CD4-positive, alpha-beta T cell (primary cell): ENCODE measurements at regions of chr13 and their contacts with region 1.

Region 1: DNA sequence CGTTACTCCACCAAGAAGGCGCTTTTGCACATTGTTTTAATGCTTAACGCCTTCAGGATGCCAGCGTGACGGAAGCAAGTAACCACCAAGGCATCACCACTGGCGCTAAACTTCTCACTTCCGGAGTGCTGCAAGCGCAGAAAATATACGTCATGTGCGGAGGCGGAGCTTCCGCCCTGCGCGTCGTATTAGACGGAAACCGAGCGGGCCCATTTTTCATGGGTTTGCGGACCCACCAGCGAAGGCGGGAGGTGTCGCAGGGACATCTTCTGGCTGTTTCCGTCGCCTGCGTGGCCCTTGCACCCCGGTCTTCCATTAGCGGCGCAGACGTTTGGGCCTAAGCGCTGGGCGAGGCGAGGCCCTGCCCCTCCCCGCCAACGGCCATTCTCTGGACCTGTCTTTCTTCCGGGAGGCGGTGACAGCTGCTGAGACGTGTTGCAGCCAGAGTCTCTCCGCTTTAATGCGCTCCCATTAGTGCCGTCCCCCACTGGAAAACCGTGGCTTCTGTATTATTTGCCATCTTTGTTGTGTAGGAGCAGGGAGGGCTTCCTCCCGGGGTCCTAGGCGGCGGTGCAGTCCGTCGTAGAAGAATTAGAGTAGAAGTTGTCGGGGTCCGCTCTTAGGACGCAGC is at the start of gene ERCC5:
- DNase-seq: peak; percentile 91 to 98 (median 95)
- ATAC-seq: peak; percentile 69
- H3K4me3 ChIP-seq: peak within 1 kb of the TSS; percentile 98
- H3K4me3 Mint-ChIP-seq: peak within 1 kb of the TSS; percentile 100
- H3K27ac ChIP-seq: peak within 1 kb of the TSS; percentile 97 to 99
- H3K27ac Mint-ChIP-seq: peak within 1 kb of the TSS; percentile 100
- H3K4me1 ChIP-seq: peaks cover 31% of the 10 kb centered on the region
- H3K4me1 Mint-ChIP-seq: peaks cover 52% of the 10 kb centered on the region
- H3K27me3 ChIP-seq: no peaks in the 10 kb centered on the region
- H3K27me3 Mint-ChIP-seq: no peaks in the 10 kb centered on the region
- CTCF ChIP-seq: peak; percentile 12
- total RNA-seq, gene ERCC5: 129 to 136 TPM

Region 2: DNA sequence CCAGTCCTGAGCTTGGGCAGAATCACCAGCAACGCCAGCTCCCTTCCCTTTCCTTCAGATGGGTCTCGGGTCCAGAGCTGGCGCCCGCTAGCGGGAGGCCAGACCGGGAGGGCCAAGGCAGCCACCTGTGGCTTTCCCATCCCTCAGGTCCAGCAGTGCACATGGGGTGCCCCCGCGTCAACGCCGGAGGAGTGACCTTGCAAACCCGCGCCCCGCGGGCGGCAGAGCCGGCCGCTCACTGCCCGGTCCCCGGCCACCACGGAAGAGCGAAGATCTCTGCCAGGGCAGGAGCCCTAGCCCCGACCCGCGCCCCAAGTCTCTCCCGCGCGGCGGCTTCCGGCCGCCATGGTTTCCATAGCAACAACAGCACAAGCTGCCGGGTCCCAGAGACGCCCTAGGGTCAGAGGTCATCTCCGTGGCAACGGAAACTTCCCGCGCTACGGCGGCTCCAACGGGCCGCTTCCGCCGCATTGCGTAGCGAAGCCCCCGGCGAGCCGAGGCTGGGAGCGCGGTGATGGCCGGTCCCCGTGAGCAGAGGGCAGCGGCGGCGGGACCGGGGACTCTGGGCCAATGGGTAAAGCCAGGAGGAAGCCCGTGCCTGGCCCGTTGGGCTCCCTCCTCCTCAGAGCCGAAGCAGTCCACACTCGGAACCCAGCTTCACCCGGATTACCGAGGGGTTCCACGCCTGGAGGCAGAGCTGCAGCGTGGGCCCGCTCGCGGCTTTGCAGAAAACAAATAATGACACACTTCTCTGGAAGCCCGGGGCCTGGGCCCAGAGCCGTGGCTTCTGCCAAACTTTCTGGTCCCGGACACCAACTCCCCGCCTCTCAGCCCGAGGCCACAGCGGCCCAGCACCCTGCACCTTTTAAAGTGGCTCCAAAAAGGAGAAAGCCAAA is 451.3 kb before region 1 on chr13:
- CTCF ChIA-PET with region 1: no interaction called
- POLR2A ChIA-PET with region 1: interaction called, 23 read pairs
- intact Hi-C with region 1: loop called (anchors 2 to 5 kb)
- DNase-seq: peak; percentile 93 to 98 (median 96)
- ATAC-seq: peak; percentile 94
- H3K4me3 ChIP-seq: peak overlapping the region; percentile 80
- H3K4me3 Mint-ChIP-seq: peak overlapping the region; percentile 95
- H3K27ac ChIP-seq: peak overlapping the region in 1 of 2 donors; percentile 50
- H3K27ac Mint-ChIP-seq: peak overlapping the region; percentile 77
- H3K4me1 ChIP-seq: peaks cover 18% of the 10 kb centered on the region
- H3K4me1 Mint-ChIP-seq: peaks cover 19% of the 10 kb centered on the region
- H3K27me3 ChIP-seq: peaks cover 3 to 6% of the 10 kb centered on the region in 2 experiments
- H3K27me3 Mint-ChIP-seq: peaks cover 20% of the 10 kb centered on the region
- CTCF ChIP-seq: no peak

Region 3: GRCh38 chr13:102609696-102610095 is 236.0 kb before region 1 on chr13:
- CTCF ChIA-PET with region 1: no interaction called
- POLR2A ChIA-PET with region 1: interaction called, 28 read pairs
- intact Hi-C with region 1: no loop called
- DNase-seq: no peak
- ATAC-seq: peak; percentile 41
- H3K4me3 ChIP-seq: no peak overlapping the region
- H3K4me3 Mint-ChIP-seq: peak overlapping the region; percentile 9
- H3K27ac ChIP-seq: no peak overlapping the region
- H3K27ac Mint-ChIP-seq: peak overlapping the region; percentile 71
- H3K4me1 ChIP-seq: peaks cover 6% of the 10 kb centered on the region
- H3K4me1 Mint-ChIP-seq: peaks cover 65% of the 10 kb centered on the region
- H3K27me3 ChIP-seq: no peaks in the 10 kb centered on the region
- H3K27me3 Mint-ChIP-seq: no peaks in the 10 kb centered on the region
- CTCF ChIP-seq: no peak

Region 4: DNA sequence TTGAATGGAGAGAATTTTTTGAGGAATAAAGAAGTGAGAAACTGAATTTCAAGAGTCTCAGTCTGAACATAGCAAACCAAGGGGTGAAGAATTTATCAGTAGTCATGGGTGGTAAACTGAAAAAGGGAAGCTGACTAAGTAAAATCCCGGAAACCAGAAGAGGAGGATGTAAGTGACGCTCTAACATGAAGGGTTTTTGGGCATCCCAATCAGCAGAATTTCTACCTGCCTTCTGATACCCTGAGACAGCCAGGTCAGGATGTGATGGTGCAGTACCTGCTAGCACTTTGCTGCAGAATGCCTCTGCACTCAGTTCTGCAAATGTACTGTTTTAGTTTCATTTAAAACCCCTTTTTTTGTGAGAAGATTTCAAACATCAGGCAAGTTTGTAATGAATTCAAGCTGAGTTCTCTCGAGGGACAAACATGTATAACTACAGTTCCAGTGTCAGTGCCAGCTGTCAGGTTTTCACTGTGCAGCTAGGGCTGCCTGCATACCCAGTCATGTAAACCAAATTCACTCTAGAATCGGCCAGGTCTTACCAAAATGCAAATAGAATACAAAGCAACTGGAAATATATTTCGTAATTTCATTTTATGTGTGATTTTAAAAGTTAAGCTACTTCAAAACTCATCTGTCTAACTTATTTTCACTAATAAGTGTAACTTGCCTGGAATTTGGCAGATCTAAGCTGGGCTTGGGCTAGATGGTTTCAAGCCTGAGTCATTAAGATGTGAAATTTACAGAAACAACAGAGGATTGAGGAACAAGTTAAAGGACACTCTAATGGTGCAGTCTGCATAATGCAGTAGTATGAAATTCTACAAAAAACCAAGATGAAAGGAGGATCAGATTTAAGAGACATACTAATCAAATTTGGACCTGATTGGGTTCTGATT is 164.7 kb before region 1 on chr13:
- CTCF ChIA-PET with region 1: no interaction called
- POLR2A ChIA-PET with region 1: interaction called, 4 read pairs
- intact Hi-C with region 1: loop called in 1 of 2 experiments (anchors 5 kb)
- DNase-seq: peak in 4 of 14 experiments; percentile 14 to 50 (median 28)
- ATAC-seq: peak; percentile 82
- H3K4me3 ChIP-seq: no peak overlapping the region
- H3K4me3 Mint-ChIP-seq: no peak overlapping the region
- H3K27ac ChIP-seq: no peak overlapping the region
- H3K27ac Mint-ChIP-seq: peak overlapping the region; percentile 47
- H3K4me1 ChIP-seq: peaks cover 2% of the 10 kb centered on the region
- H3K4me1 Mint-ChIP-seq: peaks cover 20% of the 10 kb centered on the region
- H3K27me3 ChIP-seq: no peaks in the 10 kb centered on the region
- H3K27me3 Mint-ChIP-seq: no peaks in the 10 kb centered on the region
- CTCF ChIP-seq: no peak

Region 5: DNA sequence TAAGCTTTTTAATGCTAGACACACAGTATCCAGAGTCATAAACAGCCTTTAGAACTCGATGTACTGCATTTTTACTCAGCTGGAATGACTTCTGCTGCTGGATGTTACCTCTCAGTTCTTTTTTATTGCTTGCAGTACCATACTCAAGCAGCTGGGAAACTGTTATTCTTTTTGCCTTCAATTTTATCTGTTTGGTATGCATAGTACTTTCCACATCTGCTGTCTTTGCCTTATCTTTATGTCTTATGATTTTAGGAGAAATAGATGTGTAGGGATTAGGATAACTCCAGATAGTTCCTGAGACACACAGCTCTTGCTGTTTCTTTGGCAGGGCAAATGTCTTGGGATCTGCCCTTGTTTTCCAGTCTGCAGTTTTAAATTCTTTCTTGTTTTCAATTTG is 103.6 kb before region 1 on chr13:
- CTCF ChIA-PET with region 1: no interaction called
- POLR2A ChIA-PET with region 1: no interaction called
- intact Hi-C with region 1: no loop called
- DNase-seq: no peak
- ATAC-seq: no peak
- H3K4me3 ChIP-seq: no peak overlapping the region
- H3K4me3 Mint-ChIP-seq: no peak overlapping the region
- H3K27ac ChIP-seq: no peak overlapping the region
- H3K27ac Mint-ChIP-seq: no peak overlapping the region
- H3K4me1 ChIP-seq: no peaks in the 10 kb centered on the region
- H3K4me1 Mint-ChIP-seq: no peaks in the 10 kb centered on the region
- H3K27me3 ChIP-seq: peaks cover 7 to 11% of the 10 kb centered on the region in 2 experiments
- H3K27me3 Mint-ChIP-seq: peaks cover 28% of the 10 kb centered on the region
- CTCF ChIP-seq: no peak

Region 6: DNA sequence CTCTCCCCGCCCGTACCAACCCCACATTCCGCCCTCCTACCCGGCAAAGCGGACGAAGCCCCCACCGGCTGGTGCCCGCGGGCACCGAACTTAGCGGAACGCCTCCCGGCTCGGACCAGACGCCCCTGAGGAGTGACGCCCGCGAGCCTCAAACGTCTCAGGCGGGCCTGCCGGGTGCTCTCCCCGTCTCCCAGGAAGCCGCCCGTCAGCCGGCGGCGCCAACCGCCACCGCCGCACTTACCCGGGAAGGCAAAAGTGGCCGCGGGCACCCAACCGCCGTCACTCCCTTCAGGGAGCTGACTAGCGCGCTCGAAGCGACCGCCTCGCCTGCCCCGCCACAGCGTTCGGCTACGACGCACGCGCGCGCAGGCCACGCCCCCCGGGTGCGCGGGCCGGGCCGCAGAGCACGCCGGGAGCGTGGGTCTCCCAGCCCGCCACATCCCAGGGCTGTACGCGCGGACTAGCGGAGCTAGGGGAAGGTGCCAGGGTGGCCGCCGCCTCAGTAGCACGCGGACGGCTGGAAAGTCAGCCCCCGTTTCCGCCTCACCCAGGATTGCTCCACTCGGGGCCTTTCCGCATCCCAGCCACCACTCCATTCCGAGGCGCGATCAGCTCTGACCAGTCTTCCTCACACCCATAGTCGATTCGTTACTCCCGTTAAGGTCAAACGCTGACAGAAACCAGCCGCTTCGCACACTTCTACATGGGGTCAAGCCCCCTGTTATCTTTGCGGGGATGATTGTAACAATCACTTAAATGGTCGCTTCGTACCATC is 72.1 kb before region 1 on chr13 and contains the start of gene TEX30:
- CTCF ChIA-PET with region 1: interaction called, 4 read pairs
- POLR2A ChIA-PET with region 1: interaction called, 75 read pairs
- intact Hi-C with region 1: loop called (anchors 1 to 2 kb)
- DNase-seq: peak; percentile 73 to 94 (median 84)
- ATAC-seq: peak; percentile 96
- H3K4me3 ChIP-seq: peak within 1 kb of the TSS; percentile 81
- H3K4me3 Mint-ChIP-seq: peak within 1 kb of the TSS; percentile 97
- H3K27ac ChIP-seq: peak within 1 kb of the TSS; percentile 37 to 69
- H3K27ac Mint-ChIP-seq: peak within 1 kb of the TSS; percentile 94
- H3K4me1 ChIP-seq: peaks cover 20% of the 10 kb centered on the region
- H3K4me1 Mint-ChIP-seq: peaks cover 47% of the 10 kb centered on the region
- H3K27me3 ChIP-seq: no peaks in the 10 kb centered on the region
- H3K27me3 Mint-ChIP-seq: no peaks in the 10 kb centered on the region
- CTCF ChIP-seq: no peak
- total RNA-seq, gene TEX30: 4.6 to 6.3 TPM

Region 7: GRCh38 chr13:102903659-102904407 is 58.1 kb after region 1 on chr13:
- CTCF ChIA-PET with region 1: no interaction called
- POLR2A ChIA-PET with region 1: no interaction called
- intact Hi-C with region 1: no loop called
- DNase-seq: no peak
- ATAC-seq: no peak
- H3K4me3 ChIP-seq: no peak overlapping the region
- H3K4me3 Mint-ChIP-seq: no peak overlapping the region
- H3K27ac ChIP-seq: no peak overlapping the region
- H3K27ac Mint-ChIP-seq: no peak overlapping the region
- H3K4me1 ChIP-seq: no peaks in the 10 kb centered on the region
- H3K4me1 Mint-ChIP-seq: no peaks in the 10 kb centered on the region
- H3K27me3 ChIP-seq: peaks cover 0 to 4% of the 10 kb centered on the region in 2 experiments
- H3K27me3 Mint-ChIP-seq: peaks cover 14% of the 10 kb centered on the region
- CTCF ChIP-seq: no peak